GM12878 (cell line): ENCODE measurements at regions of chr5 and their contacts with region 1.

Region 1: GRCh38 chr5:114435885-114436299 is 74.0 kb downstream of the KCNN2 start:
- DNase-seq: peak; percentile 73
- ATAC-seq: peak; percentile 84
- H3K4me3 ChIP-seq: no peak overlapping the region
- H3K27ac ChIP-seq: no peak overlapping the region
- H3K4me1 ChIP-seq: no peaks in the 10 kb centered on the region; the same call in 1 of the 2 replicates
- H3K27me3 ChIP-seq: no peaks in the 10 kb centered on the region
- CTCF ChIP-seq: no peak
- EP300 ChIP-seq: peak; percentile 69 to 82; a peak in 2 of 4 replicates
- POLR2A ChIP-seq: no peak
- RAD21 ChIP-seq: no peak

Region 2: DNA sequence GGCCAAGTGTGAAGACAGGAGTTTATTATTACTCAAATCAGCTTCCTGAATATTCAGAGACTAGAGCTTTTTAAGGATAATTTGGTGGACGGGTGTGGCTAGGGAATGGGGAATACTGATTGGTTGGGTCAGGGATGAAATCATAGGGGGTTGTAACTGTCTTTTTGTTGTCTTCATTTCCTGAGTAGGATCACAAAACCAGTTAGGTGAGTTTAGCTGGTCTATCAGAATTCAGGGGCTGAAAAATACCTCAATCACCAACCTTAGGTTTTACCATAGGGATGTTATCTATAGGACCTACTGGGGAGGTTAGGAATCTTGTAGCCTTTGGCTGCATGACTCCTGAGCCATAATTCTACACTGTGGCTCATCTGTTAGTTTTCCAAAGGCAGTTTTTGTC is 686.6 kb before region 1 on chr5:
- CTCF ChIA-PET with region 1: no interaction called
- POLR2A ChIA-PET with region 1: no interaction called
- RAD21 ChIA-PET with region 1: no interaction called
- SMC1A ChIA-PET with region 1: no interaction called
- in situ Hi-C with region 1: no loop called
- intact Hi-C with region 1: no loop called
- DNase-seq: no peak
- ATAC-seq: no peak
- H3K4me3 ChIP-seq: no peak overlapping the region
- H3K27ac ChIP-seq: no peak overlapping the region
- H3K4me1 ChIP-seq: no peaks in the 10 kb centered on the region
- H3K27me3 ChIP-seq: no peaks in the 10 kb centered on the region
- CTCF ChIP-seq: no peak
- EP300 ChIP-seq: no peak
- POLR2A ChIP-seq: no peak
- RAD21 ChIP-seq: no peak

Region 3: DNA sequence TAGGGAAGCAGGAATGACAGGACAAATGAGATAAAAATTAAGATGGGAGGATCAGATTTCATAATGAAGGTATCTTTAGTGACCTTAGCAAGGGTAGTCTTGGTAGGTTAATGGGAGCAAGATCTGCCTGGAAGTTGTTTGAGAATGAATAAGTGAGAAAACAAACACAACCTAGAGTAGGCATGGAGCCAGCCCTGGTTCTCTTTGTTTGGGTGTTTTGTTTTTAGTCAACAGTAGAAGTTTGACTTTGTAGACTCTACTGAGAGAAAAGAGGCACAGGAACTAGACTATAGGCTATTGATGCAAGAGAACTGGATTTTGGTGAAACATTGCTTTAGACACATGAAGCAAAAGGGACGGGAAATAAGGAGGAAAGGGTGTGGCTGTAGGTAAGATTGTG is 33.7 kb before region 1 on chr5:
- CTCF ChIA-PET with region 1: no interaction called
- POLR2A ChIA-PET with region 1: interaction called, 10 read pairs
- RAD21 ChIA-PET with region 1: interaction called, 3 read pairs
- SMC1A ChIA-PET with region 1: interaction called, 3 read pairs
- in situ Hi-C with region 1: no loop called
- intact Hi-C with region 1: no loop called
- DNase-seq: no peak
- ATAC-seq: peak; percentile 49
- H3K4me3 ChIP-seq: no peak overlapping the region
- H3K27ac ChIP-seq: no peak overlapping the region
- H3K4me1 ChIP-seq: no peaks in the 10 kb centered on the region
- H3K27me3 ChIP-seq: no peaks in the 10 kb centered on the region
- CTCF ChIP-seq: no peak
- EP300 ChIP-seq: no peak
- POLR2A ChIP-seq: no peak
- RAD21 ChIP-seq: no peak

Region 4: DNA sequence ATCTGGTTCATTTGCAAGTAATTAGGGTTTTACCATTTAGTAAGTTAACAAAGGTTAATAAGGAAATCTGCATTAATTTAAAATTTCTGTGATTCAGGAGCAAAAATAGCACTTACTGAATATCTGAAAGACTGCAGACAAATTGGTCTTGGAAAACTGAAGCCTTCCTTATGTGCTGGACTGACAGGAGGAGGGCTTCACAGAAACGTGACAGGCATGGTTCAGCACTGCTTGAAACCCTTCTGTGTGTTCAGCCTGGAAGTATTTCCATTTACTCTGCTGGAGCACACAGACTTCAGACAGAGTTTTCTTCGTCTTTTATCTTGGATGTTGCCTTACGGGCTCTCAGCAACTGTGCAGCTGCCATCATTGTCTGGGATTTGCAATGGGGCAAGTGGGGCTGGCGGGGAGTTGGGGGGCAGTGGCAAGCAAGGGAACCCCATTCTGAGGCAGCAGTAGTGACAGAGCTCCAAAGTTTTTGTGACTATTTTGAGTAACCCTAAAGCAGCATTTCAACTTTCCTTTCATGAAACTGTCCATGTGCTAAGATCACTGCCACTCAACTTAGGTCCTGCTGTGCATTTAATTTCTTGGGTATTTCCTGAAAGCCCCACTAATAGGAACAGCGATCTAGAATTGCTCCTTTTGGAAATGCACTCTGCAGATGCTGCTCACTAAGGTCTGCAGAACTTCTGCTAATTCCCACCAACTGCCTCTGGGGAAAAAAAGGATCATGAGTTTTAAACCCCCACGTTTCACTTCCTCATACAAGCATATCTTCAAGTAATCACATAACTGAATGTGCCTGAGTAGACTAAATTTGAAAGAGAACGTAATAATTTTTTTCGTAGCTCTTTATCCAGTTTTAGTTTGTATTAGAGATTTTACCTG is 17.5 kb before region 1 on chr5:
- CTCF ChIA-PET with region 1: interaction called, 130 read pairs
- POLR2A ChIA-PET with region 1: interaction called, 28 read pairs
- RAD21 ChIA-PET with region 1: interaction called, 217 read pairs
- SMC1A ChIA-PET with region 1: interaction called, 347 read pairs
- in situ Hi-C with region 1: no loop called
- intact Hi-C with region 1: loop called (anchors 2 kb)
- DNase-seq: peak; percentile 56
- ATAC-seq: peak; percentile 91
- H3K4me3 ChIP-seq: 0 out of 2 replicates have a peak overlapping the region, but pooled peaks have one; percentile 3
- H3K27ac ChIP-seq: peak overlapping the region; percentile 43; the same call in 1 of the 2 replicates
- H3K4me1 ChIP-seq: no peaks in the 10 kb centered on the region
- H3K27me3 ChIP-seq: no peaks in the 10 kb centered on the region
- CTCF ChIP-seq: no peak
- EP300 ChIP-seq: peak; percentile 94 to 96
- POLR2A ChIP-seq: no peak
- RAD21 ChIP-seq: peak; percentile 24; the same call in 1 of the 2 replicates

Region 5: GRCh38 chr5:114477816-114478334 is 42.0 kb after region 1 on chr5:
- CTCF ChIA-PET with region 1: no interaction called
- POLR2A ChIA-PET with region 1: no interaction called
- RAD21 ChIA-PET with region 1: no interaction called
- SMC1A ChIA-PET with region 1: no interaction called
- in situ Hi-C with region 1: no loop called
- intact Hi-C with region 1: no loop called
- DNase-seq: no peak
- ATAC-seq: no peak
- H3K4me3 ChIP-seq: no peak overlapping the region
- H3K27ac ChIP-seq: no peak overlapping the region
- H3K4me1 ChIP-seq: no peaks in the 10 kb centered on the region
- H3K27me3 ChIP-seq: no peaks in the 10 kb centered on the region
- CTCF ChIP-seq: no peak
- EP300 ChIP-seq: no peak
- POLR2A ChIP-seq: no peak
- RAD21 ChIP-seq: no peak

Region 6: GRCh38 chr5:114839360-114839759 is 403.5 kb after region 1 on chr5:
- CTCF ChIA-PET with region 1: no interaction called
- POLR2A ChIA-PET with region 1: no interaction called
- RAD21 ChIA-PET with region 1: no interaction called
- SMC1A ChIA-PET with region 1: no interaction called
- in situ Hi-C with region 1: no loop called
- intact Hi-C with region 1: no loop called
- DNase-seq: no peak
- ATAC-seq: no peak
- H3K4me3 ChIP-seq: no peak overlapping the region
- H3K27ac ChIP-seq: no peak overlapping the region
- H3K4me1 ChIP-seq: no peaks in the 10 kb centered on the region
- H3K27me3 ChIP-seq: no peaks in the 10 kb centered on the region
- CTCF ChIP-seq: no peak
- EP300 ChIP-seq: no peak
- POLR2A ChIP-seq: no peak
- RAD21 ChIP-seq: no peak